Heart right ventricle (tissue), 16 donors: ENCODE measurements at regions of chrX and their contacts with region 1.

Region 1: DNA sequence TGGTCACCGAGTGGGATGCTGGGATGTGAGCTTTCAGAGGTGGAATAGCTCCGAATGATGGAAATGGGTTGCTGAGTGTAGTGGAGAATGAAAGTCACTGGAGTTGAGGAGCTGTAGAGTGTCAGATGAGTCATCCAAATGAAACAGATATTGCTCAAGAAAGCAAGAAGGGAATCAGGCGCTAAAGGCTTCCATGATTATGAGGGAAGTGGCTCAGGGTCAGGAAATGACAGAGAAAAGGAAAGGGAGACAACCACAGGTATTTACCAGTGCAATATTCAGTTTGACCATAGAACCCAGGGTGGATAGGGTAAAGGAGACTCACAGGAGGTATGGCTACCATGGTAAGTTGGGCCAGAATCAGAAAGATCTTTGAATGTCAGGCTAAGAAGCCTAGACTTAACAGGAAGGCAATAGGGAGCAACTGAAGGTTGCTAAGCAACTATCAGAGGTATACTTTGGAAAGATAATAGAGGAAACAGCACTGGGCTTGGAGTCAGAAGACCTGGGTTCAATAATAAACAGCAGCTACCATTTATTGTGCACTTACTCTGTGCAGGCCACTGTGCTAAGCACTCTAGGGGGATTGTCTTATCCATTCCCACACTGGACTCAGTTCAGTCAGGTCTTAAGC is 11.7 kb downstream of the LAS1L start:
- DNase-seq: no peak
- ATAC-seq: no peak
- H3K4me3 ChIP-seq: no peak overlapping the region
- H3K27ac ChIP-seq: no peak overlapping the region
- H3K4me1 ChIP-seq: peaks cover 0 to under 1% (median 0%) of the 10 kb centered on the region in 9 donors
- H3K27me3 ChIP-seq: peaks cover 0 to 19% (median 0%) of the 10 kb centered on the region in 7 donors
- CTCF ChIP-seq: no peak

Region 2: DNA sequence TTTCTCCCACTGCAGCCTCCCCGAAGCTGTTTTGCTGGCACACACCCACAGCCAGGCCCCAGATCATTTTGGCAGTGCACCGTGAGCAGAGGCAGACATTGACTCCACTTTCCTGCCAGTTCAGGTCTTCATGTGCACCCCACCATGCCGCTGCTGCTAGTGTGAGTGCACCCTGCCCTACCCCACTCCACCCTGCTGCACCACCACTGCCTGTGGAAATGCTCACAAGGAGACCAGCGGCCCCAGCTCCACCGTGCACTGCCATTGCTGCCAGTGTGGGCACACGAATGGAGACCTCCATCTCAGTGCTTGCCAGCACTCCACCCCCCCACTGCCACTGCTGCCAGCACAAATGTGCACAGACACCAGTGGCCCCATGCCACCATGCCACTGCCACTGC is 269.0 kb before region 1 on chrX:
- intact Hi-C with region 1: loop called in 1 of 10 experiments (anchors 5 kb)
- DNase-seq: no peak
- ATAC-seq: no peak
- H3K4me3 ChIP-seq: no peak overlapping the region
- H3K27ac ChIP-seq: no peak overlapping the region
- H3K4me1 ChIP-seq: no peaks in the 10 kb centered on the region
- H3K27me3 ChIP-seq: no peaks in the 10 kb centered on the region
- CTCF ChIP-seq: no peak

Region 3: DNA sequence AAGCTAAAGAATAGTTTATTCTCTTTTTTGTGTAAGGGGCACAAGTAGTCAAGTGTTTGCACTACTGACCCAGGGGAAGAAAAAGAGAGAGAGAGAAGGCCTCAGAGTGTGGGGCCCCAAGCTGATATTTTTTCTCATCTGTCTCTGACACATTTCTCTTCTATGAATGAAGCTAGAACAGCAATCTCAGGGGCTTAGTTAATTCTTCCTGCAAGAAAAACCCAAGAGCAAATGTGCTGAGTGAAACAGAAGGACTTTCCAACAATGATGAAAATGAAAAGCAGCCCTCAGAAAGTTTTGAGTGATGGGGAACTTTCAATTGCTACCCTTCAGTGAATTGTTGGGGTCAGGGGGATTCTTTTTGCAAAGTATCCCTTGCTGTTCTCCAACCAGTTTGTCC is 135.4 kb after region 1 on chrX:
- intact Hi-C with region 1: no loop called
- DNase-seq: no peak
- ATAC-seq: no peak
- H3K4me3 ChIP-seq: no peak overlapping the region
- H3K27ac ChIP-seq: no peak overlapping the region
- H3K4me1 ChIP-seq: peaks cover 0 to 9% (median 3%) of the 10 kb centered on the region in 9 donors
- H3K27me3 ChIP-seq: peaks cover 0 to 21% (median 0%) of the 10 kb centered on the region in 7 donors
- CTCF ChIP-seq: no peak